Sciatic nerve (tissue), 2 donors: ENCODE measurements at regions of chr1 and their contacts with region 1.

Region 1: GRCh38 chr1:224851210-224851847 is 78.1 kb upstream of the DNAH14 start:
- DNase-seq: peak; percentile 75
- ATAC-seq: peak; percentile 60

Region 2: DNA sequence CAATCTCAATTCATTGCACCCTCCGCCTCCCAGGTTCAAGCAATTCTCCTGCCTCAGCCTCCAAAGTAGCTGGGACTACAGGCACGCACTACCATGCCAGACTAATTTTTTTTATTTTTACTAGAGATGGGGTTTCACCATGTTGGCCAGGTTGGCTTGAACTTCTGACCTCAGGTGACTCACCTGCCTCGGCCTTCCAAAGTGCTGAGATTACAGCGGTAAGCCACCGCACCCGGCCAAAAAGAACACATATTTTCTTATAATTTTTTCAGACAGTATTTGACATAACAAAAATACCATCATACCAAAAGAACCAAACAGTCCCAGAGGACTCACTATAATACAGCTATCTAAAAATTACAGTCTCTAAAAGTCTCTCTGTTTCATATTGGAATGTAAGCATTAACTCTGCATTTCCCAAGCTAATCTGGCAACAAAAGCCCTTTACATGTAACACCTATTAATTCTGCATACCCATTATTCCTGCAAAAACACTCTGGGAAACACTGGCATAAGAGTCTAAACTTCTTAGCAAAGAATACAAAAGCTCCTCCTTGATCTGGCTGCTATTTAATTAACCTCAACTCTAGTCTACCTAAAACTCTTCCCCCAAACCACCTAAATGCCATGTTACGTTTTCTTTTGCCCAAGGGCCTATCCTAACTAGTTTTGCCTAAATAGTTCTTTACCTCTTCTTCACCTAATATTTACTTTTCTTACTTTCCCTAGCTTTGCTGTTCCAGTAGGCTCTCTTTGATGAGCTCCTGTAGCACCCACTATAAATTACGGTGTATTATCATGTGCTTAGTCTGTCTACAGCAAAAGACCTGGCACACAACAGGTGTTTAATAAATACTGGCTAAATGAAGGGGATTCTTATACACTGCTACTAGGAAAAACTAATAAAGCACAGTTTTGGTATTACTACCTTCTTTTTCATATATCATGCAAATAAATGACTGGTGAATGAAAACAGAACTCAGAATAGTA is 443.5 kb before region 1 on chr1:
- intact Hi-C with region 1: no loop called
- DNase-seq: no peak
- ATAC-seq: no peak

Region 3: DNA sequence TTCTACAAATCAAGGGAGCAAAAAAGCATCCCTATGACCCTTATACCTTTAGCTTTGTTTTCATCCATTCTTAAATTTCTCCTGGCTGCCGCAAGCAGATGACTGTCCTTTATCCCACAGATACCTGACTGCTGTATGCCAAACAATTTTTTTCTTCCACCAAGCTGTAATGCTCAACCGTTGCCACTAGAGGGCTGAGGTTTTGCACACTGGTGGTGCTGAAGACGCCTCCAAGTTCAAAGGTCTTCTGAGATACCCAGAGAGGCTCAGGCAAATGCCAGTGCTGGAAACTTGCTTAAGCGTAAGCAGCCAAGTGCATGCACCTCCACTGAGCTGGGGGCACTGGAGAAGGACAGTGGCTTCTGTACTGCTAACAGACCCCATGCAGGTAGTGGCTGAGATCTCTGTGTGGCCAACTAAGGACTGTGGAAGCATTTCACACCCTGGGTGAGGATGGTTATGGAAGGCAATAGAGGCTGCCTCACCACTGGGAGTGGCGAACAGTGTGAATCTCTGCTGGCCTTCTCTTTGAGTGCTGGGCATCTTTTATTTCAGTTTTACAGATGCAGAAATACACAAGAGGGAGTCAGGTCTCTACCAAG is 206.7 kb before region 1 on chr1:
- intact Hi-C with region 1: loop called (anchors 10 kb)
- DNase-seq: peak; percentile 65
- ATAC-seq: peak; percentile 69

Region 4: DNA sequence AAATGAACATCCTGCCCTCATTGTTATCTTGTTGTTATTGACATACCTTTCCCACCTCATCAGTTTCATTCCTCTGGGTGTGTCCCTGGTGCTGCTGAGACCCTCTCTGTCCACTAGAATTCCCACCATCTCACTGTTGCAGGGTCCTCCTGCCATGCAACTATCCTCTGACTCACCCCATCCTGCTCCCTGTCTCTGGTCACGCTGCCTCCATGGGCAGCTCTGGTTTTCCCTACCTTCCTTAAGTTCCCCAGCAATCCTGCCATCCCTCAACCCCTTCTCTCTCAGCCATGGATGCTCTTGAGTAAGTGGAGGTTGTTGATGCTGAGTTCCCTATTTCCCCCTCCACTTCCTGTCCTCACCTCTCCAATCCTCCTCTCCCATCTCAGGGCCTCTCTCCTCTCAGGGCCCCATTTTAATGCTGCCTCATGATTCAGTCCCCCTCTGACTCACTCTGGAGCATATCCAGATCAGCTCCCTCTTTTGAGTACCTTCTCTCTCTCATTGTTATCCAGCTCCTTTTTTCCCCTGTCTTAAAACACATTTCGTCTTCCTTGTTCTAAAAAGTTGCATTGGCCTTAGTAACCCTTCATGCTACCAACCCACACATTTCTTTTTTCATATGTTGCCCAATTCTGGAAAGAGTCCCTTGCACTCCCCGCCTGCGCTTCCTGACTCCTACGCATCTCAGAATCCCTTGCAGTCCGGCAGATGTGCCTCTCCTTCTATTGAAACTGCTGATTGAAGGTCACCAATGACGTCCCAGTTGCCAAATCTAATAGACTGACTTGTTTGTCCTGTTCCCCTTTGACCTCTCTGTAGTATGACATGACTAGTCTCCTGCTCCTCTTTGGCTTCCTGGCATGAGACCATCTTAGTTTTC is 143.2 kb before region 1 on chr1:
- intact Hi-C with region 1: no loop called
- DNase-seq: no peak
- ATAC-seq: no peak